ENCODE measurements at regions of chr6 and their contacts with region 1.

Region 1: GRCh38 chr6:391559-392440 is at the start of gene IRF4:
- DNase-seq: peak; percentile 69
- H3K4me3 Mint-ChIP-seq: peak within 1 kb of the TSS; percentile 98
- H3K27ac Mint-ChIP-seq: peak within 1 kb of the TSS; percentile 98
- H3K4me1 Mint-ChIP-seq: peaks cover 41% of the 10 kb centered on the region
- H3K27me3 Mint-ChIP-seq: peaks cover 3% of the 10 kb centered on the region
- total RNA-seq, gene IRF4: 911 and 929 TPM in 2 replicates

Region 2: GRCh38 chr6:336159-337019 is 55.4 kb before region 1 on chr6:
- intact Hi-C with region 1: loop called (anchors 2 kb)
- DNase-seq: no peak
- H3K4me3 Mint-ChIP-seq: peak overlapping the region; percentile 21
- H3K27ac Mint-ChIP-seq: peak overlapping the region; percentile 57
- H3K4me1 Mint-ChIP-seq: peaks cover 54% of the 10 kb centered on the region
- H3K27me3 Mint-ChIP-seq: no peaks in the 10 kb centered on the region

Region 3: DNA sequence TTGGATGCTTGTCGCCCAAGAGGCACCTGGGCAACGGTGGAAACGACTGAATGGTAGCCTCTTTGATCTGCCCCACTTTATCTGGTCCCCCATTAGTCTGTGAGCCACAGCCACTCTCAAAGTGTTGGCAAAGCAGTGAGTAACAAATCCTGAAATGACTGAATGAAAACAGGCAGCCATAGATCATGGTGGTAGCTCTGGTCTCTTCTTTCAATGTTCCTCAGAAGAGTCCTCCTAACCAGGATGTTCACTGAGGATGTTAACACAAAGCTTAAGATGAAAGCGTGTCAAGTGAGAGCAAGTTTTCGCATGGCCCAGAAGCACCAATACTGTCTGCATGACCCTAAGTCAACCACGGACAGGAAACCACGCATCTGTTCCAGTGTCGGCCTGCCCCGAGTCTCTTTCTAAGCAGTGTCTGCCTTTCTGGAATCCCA is 107.0 kb after region 1 on chr6:
- intact Hi-C with region 1: loop called (anchors 2 kb)
- DNase-seq: peak; percentile 56
- H3K4me3 Mint-ChIP-seq: peak overlapping the region; percentile 80
- H3K27ac Mint-ChIP-seq: peak overlapping the region; percentile 94
- H3K4me1 Mint-ChIP-seq: peaks cover 87% of the 10 kb centered on the region
- H3K27me3 Mint-ChIP-seq: no peaks in the 10 kb centered on the region

Region 4: DNA sequence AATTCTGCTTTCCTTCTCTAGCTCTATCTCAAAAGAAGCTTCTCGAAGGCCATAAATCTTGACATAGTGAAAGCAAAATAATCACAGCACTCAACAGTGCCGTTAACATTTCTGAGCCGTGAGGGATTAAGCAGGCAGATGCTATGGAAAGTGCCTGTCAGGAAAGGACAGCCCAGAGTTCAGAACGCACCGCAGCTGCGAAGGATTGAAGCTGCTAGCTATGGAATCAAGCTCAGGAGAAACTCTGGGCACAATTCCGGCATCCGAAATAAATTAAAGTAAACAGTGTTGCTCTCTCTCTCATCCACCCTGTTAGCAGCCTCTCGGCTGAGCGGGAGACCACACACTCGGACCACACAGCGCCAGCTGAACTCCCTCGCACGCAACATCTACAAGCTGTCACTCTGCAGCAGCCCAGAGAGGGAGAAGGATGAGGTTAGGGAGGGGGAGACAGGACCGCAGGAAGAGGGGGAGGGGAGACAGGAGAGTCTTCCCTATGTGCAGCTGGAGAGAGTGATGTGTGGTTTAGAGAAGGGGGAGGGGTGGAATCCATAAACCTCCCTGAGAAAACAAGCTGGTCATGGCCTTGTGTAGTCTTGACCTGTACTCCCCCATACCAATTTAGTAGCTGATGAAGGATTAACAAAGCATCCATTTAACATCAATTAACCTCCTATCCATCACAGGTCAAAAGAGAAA is 292.1 kb after region 1 on chr6:
- intact Hi-C with region 1: loop called (anchors 2 kb)
- DNase-seq: no peak
- H3K4me3 Mint-ChIP-seq: peak overlapping the region; percentile 41
- H3K27ac Mint-ChIP-seq: peak overlapping the region; percentile 16
- H3K4me1 Mint-ChIP-seq: peaks cover 47% of the 10 kb centered on the region
- H3K27me3 Mint-ChIP-seq: no peaks in the 10 kb centered on the region

Region 5: GRCh38 chr6:786946-787763 is 395.4 kb after region 1 on chr6:
- intact Hi-C with region 1: loop called (anchors 2 kb)
- DNase-seq: no peak
- H3K4me3 Mint-ChIP-seq: no peak overlapping the region
- H3K27ac Mint-ChIP-seq: no peak overlapping the region
- H3K4me1 Mint-ChIP-seq: peaks cover 19% of the 10 kb centered on the region
- H3K27me3 Mint-ChIP-seq: peaks cover 8% of the 10 kb centered on the region

Region 6: GRCh38 chr6:797479-798077 is 405.8 kb after region 1 on chr6:
- intact Hi-C with region 1: no loop called
- DNase-seq: no peak
- H3K4me3 Mint-ChIP-seq: no peak overlapping the region
- H3K27ac Mint-ChIP-seq: no peak overlapping the region
- H3K4me1 Mint-ChIP-seq: no peaks in the 10 kb centered on the region
- H3K27me3 Mint-ChIP-seq: peaks cover 48% of the 10 kb centered on the region